PC-9 (cell line): ENCODE measurements at regions of chr18 and their contacts with region 1.

Region 1: DNA sequence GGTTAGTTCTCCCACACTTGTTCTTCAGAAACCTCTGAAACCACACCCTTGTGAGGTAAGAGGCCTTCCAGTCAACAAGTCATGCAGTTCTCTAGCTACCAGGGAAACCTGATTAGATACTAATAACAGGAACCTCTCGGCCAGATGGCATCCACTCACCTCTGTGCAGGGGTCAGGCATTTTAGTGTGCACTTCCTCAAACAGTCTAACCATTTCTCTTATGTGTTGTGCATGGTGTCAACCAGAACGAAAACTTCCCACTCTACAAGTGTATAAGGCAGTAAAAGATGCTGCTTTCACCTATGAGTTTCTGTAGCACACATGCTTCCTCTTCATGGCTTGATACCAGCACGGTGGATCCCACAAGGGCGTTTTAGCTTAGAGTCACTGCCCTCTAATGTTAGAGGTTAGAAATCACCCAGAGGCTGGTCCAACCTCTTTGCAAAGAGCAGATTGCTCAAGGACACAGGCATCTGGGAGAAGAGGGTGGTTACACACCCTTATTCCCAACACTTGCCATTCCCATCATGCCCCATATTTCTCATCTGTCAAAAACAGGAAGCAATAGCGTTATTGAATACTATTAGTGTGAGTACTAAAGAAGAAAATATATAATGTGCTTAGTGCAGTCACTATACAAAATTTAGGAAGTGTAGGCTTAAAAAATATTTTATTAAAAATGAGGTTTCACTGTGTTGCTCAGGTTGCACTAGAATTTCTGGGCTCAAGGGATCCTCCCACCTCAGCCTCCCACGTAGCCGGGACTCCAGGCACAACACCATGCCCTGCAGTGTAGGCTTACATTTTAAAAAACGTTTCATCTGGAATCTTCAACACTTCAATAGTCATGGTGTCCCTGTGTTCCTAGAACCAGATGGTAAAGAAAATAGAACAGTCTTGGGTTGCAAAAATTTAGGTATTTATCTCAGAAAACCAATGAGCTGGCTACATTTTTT is 34.5 kb upstream of the RAB31 start:
- DNase-seq: peak; percentile 84 to 100
- H3K4me3 ChIP-seq: peak overlapping the region; percentile 36; the same call in 1 of the 2 replicates
- H3K27ac ChIP-seq: peak overlapping the region; percentile 92
- H3K4me1 ChIP-seq: peaks cover 34% of the 10 kb centered on the region
- H3K27me3 ChIP-seq: no peaks in the 10 kb centered on the region
- CTCF ChIP-seq: peak; percentile 61

Region 2: DNA sequence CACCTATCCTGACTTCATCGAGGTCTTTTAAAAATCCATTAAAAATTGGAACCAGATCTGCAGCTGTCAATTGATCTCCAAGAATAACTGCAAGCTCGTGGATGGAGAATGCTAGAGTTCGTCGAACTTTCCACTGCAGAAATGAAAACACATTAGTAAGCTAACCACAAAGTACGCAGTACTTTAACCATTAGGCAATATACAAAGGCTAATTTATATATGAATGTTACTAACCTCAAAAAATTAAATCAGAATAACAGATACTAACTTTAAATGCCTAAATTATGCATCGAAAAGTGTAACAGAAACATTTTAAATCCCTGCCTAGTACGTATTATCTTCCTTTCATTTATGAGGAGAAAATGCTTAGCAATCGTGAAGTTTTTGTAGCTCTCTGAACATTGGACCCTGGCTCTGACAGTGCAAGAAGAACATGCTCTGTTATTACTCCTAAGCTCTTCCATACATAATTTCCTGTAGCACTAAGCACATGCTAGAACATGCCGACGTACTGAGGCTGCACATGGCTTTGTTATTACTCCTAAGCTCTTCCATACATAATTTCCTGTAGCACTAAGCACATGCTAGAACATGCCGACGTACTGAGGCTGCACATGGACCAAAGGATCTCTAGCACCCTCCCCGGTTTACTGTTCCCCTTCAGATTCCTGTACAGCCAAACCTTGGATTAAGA is 116.2 kb before region 1 on chr18:
- CTCF ChIA-PET with region 1: no interaction called
- POLR2A ChIA-PET with region 1: interaction called, 10 read pairs
- intact Hi-C with region 1: no loop called
- DNase-seq: no peak
- H3K4me3 ChIP-seq: no peak overlapping the region
- H3K27ac ChIP-seq: no peak overlapping the region
- H3K4me1 ChIP-seq: no peaks in the 10 kb centered on the region
- H3K27me3 ChIP-seq: no peaks in the 10 kb centered on the region
- CTCF ChIP-seq: no peak

Region 3: GRCh38 chr18:9609190-9609589 is 64.4 kb before region 1 on chr18:
- CTCF ChIA-PET with region 1: interaction called, 15 read pairs
- POLR2A ChIA-PET with region 1: interaction called, 10 read pairs
- intact Hi-C with region 1: loop called (anchors 1 kb)
- DNase-seq: no peak
- H3K4me3 ChIP-seq: peak overlapping the region; percentile 26; the same call in 1 of the 2 replicates
- H3K27ac ChIP-seq: peak overlapping the region; percentile 10
- H3K4me1 ChIP-seq: peaks cover 48% of the 10 kb centered on the region
- H3K27me3 ChIP-seq: no peaks in the 10 kb centered on the region
- CTCF ChIP-seq: no peak

Region 4: DNA sequence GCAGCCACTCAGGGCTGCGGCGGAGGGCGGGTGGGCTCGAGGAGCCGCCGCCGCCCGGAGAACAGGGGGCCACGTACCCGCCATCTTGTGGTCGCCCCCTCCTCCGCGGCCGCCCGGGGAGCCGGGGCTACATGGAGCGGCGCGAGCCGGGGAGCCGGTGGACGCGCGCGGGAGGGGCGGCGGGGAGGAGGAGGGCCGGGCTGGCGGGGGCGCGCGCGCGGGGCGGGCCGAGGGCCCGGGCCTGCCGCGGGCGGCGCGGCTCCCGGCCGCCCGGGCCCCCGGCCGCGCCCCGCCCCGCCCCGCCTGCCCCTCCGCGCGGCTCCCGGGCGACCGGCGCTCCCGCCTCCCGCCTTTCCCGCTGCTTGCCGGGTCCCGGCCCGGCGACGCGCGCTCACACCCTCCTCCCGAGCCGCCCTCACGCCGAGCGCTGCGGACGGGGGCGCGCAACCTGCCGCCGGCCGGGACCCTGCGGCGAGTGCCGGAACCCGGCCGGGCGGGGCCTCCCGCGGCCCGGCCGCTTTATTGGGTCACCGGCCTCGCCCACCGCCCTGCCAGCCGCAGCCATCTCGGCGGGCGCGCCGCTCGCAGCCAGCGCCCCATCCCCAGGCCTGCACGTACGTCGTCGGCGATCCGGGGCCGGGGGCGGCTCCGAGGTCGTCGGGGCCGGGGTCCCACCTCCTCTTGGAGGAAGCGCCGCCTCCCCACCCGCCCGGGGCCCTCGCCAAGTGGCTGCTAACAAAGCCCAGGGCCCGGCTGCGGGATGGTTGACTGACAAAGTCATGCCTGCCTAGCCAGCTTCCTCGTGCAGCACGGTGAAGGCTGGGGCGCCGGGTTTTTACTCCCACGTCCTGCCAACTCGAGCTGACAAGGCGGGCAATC is 58.9 kb before region 1 on chr18 and contains the start of gene PPP4R1:
- CTCF ChIA-PET with region 1: interaction called, 15 read pairs
- POLR2A ChIA-PET with region 1: interaction called, 10 read pairs
- intact Hi-C with region 1: loop called (anchors 1 kb)
- DNase-seq: peak; percentile 56 to 80
- H3K4me3 ChIP-seq: peak within 1 kb of the TSS; percentile 94
- H3K27ac ChIP-seq: peak within 1 kb of the TSS; percentile 97
- H3K4me1 ChIP-seq: peaks cover 71% of the 10 kb centered on the region
- H3K27me3 ChIP-seq: no peaks in the 10 kb centered on the region
- CTCF ChIP-seq: no peak
- total RNA-seq, gene PPP4R1: 157 and 167 TPM in 2 replicates

Region 5: DNA sequence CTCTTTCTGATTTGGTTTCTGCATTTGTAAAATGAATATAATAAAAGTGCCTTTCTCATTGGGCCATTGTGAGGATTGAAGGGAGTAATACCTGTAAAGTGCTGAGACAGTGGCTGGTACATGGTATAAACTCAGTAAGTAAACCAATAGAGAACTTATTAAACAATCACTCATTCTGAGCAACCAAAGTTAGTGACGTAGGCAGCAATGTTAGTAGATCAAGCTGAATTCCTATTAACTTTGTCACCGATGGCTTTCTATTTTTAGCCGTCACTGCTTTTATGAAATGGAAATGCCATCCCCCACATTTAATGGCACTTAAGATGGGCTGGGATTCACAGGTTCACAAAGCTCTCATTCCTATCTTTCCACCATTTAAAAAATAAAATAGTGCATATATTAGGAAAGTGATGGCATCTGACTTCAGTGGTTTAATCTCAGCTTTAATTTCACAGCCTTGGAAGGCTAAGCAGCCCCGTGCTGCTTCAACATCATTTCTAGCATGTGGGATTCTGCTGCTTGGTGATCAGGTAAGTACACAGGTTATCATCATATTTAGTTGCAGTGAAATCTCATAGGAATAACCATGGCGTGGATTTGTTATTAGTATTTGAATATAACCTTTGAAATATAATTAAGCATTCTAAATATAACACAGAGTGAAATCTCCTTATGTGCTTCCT is 41.6 kb before region 1 on chr18:
- CTCF ChIA-PET with region 1: no interaction called
- POLR2A ChIA-PET with region 1: interaction called, 11 read pairs
- intact Hi-C with region 1: no loop called
- DNase-seq: peak in 1 of 2 experiments; percentile 88
- H3K4me3 ChIP-seq: no peak overlapping the region; the same call in 1 of the 2 replicates
- H3K27ac ChIP-seq: peak overlapping the region; percentile 65
- H3K4me1 ChIP-seq: peaks cover 37% of the 10 kb centered on the region
- H3K27me3 ChIP-seq: no peaks in the 10 kb centered on the region
- CTCF ChIP-seq: no peak

Region 6: DNA sequence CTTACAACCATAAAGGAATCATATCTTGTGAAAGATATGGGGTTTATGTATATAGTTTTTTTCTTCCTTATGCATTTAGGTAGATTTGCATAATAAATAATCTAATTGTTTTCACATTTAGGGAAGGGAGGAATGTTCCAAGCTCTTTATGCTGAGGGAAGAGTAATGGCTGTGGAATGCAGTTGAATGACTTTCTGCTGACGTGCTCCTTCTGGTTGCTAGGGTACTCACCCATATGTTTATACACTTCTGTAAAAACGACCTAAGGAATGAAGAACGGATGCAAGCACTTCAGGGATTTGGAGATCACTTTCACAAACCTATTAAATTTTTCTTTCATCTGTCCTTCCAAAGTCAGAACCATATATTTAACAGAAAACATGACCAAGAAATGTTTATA is 30.0 kb before region 1 on chr18:
- CTCF ChIA-PET with region 1: interaction called, 3 read pairs
- POLR2A ChIA-PET with region 1: interaction called, 12 read pairs
- intact Hi-C with region 1: loop called (anchors 1 kb)
- DNase-seq: peak; percentile 74 to 97
- H3K4me3 ChIP-seq: peak overlapping the region; percentile 13; the same call in 1 of the 2 replicates
- H3K27ac ChIP-seq: peak overlapping the region; percentile 84
- H3K4me1 ChIP-seq: peaks cover 52% of the 10 kb centered on the region
- H3K27me3 ChIP-seq: no peaks in the 10 kb centered on the region
- CTCF ChIP-seq: no peak

Region 7: GRCh38 chr18:9898792-9899549 is 225.4 kb after region 1 on chr18:
- CTCF ChIA-PET with region 1: interaction called, 5 read pairs
- POLR2A ChIA-PET with region 1: interaction called, 10 read pairs
- intact Hi-C with region 1: no loop called
- DNase-seq: peak; percentile 56 to 99
- H3K4me3 ChIP-seq: no peak overlapping the region
- H3K27ac ChIP-seq: peak overlapping the region; percentile 73
- H3K4me1 ChIP-seq: peaks cover 25% of the 10 kb centered on the region
- H3K27me3 ChIP-seq: no peaks in the 10 kb centered on the region
- CTCF ChIP-seq: no peak

Region 8: DNA sequence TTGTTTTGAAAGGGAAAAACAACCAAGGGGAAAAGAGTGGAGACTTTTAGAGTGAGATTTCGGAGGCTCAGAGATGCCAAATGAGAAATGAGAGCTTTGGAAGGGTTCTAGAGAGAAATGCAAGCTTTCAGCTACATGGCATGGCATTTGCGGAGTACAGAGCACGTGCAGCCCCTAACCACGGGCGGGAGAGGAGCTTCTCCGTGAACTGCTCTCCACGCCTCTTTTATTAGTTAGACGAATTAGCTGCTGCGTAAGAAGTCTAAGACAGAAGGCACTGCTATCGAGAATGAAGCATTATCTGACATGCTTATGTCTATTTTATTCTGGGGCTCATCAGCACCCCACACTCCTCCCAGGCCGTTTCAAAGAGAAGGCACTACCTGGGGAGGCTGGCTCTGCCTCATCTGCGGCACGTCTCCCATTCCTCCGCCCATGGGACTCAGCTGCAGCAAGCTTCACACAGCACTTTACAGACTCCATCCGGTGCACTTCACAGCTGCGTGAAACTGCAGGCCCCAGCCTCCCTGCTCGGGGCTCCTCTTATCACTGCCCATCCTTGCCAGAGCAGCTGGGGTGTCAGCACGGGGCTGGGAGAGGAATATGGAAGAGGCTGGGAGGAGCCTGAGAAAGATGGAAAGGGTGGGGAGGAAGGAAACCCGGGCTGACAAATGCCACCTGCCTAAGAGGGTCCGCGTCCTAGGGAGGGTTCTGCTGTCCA is 573.6 kb after region 1 on chr18:
- CTCF ChIA-PET with region 1: no interaction called
- POLR2A ChIA-PET with region 1: no interaction called
- intact Hi-C with region 1: no loop called
- DNase-seq: no peak
- H3K4me3 ChIP-seq: no peak overlapping the region
- H3K27ac ChIP-seq: no peak overlapping the region
- H3K4me1 ChIP-seq: no peaks in the 10 kb centered on the region
- H3K27me3 ChIP-seq: no peaks in the 10 kb centered on the region
- CTCF ChIP-seq: no peak